ENCODE measurements at regions of chr1 and their contacts with region 1.

Region 1: GRCh38 chr1:201385299-201385891 is 7.9 kb upstream of the TNNT2 start:
- DNase-seq: no peak
- ATAC-seq: peak; percentile 99
- H3K4me3 ChIP-seq: no peak overlapping the region
- H3K27ac ChIP-seq: no peak overlapping the region
- H3K4me1 ChIP-seq: no peaks in the 10 kb centered on the region
- H3K27me3 ChIP-seq: no peaks in the 10 kb centered on the region; a peak in 1 of 4 replicates
- CTCF ChIP-seq: peak; percentile 93 to 97 (median 96); a peak in 5 of 6 replicates
- EP300 ChIP-seq: no peak
- POLR2A ChIP-seq: no peak
- RAD21 ChIP-seq: peak; percentile 78

Region 2: GRCh38 chr1:201396861-201397464 is 11.6 kb after region 1 on chr1:
- CTCF ChIA-PET with region 1: interaction called, 623 read pairs
- POLR2A ChIA-PET with region 1: interaction called, 228 read pairs
- RAD21 ChIA-PET with region 1: interaction called, 340 read pairs
- SMC1A ChIA-PET with region 1: interaction called, 374 read pairs
- in situ Hi-C with region 1: no loop called
- intact Hi-C with region 1: no loop called
- DNase-seq: no peak
- ATAC-seq: peak; percentile 49
- H3K4me3 ChIP-seq: no peak overlapping the region
- H3K27ac ChIP-seq: no peak overlapping the region
- H3K4me1 ChIP-seq: peaks cover 9% of the 10 kb centered on the region
- H3K27me3 ChIP-seq: no peaks in the 10 kb centered on the region
- CTCF ChIP-seq: no peak
- EP300 ChIP-seq: no peak
- POLR2A ChIP-seq: no peak
- RAD21 ChIP-seq: no peak

Region 3: DNA sequence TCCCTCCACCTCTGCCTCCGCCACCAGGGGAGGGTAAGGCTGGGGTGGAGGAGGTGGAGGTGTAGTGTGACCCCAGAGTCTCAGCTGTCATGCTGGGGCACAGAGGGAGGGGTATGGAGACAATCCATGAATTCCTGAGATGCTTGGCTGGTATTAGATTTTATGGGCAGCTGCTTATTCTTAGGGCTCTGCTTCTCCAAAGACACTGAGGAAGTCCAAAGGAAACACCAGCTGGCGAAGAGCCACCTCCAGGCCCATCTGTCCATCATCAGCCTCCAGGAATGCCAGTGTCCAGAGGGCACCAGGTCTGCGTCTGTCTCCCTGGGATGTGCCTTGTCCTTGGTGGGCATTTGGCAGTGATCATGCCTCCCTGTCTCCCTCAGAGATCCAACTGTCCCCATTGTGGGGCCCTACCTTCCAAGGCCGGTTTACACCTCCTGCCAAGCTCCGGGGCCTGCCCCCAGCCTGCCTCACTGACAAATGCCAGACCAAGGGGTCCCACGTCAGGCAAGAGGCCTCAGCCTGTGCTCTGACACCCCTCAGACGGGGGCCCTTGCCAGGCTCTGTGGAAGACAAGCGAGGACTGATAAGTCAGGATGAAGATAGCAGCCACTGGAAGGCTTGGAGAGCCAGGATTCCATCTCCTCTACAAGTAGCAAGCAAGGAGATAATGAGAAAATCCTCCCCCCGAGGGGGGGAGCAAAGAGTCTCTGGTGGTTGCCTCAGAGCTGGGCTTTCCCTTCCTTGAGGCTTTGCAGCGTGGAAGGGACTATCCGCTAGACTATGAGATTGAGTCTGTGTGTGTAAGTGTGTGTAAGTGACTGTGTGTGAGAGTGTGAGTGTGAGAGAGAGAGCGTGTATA is 34.6 kb after region 1 on chr1:
- CTCF ChIA-PET with region 1: interaction called, 25 read pairs
- POLR2A ChIA-PET with region 1: interaction called, 3 read pairs
- RAD21 ChIA-PET with region 1: interaction called, 12 read pairs
- SMC1A ChIA-PET with region 1: interaction called, 16 read pairs
- in situ Hi-C with region 1: no loop called
- intact Hi-C with region 1: no loop called
- DNase-seq: no peak
- ATAC-seq: peak; percentile 83
- H3K4me3 ChIP-seq: no peak overlapping the region
- H3K27ac ChIP-seq: no peak overlapping the region
- H3K4me1 ChIP-seq: peaks cover 8% of the 10 kb centered on the region
- H3K27me3 ChIP-seq: no peaks in the 10 kb centered on the region; a peak in 2 of 4 replicates
- CTCF ChIP-seq: no peak
- EP300 ChIP-seq: no peak
- POLR2A ChIP-seq: no peak
- RAD21 ChIP-seq: no peak